Activated CD8-positive, alpha-beta memory T cell treated with anti-CD3 and anti-CD28 coated beads, Interleukin-2, amount 10 ng/mL, durations not matched to agents 7 days and 5 days (primary cell): ENCODE measurements at regions of chr11 and their contacts with region 1.

Region 1: DNA sequence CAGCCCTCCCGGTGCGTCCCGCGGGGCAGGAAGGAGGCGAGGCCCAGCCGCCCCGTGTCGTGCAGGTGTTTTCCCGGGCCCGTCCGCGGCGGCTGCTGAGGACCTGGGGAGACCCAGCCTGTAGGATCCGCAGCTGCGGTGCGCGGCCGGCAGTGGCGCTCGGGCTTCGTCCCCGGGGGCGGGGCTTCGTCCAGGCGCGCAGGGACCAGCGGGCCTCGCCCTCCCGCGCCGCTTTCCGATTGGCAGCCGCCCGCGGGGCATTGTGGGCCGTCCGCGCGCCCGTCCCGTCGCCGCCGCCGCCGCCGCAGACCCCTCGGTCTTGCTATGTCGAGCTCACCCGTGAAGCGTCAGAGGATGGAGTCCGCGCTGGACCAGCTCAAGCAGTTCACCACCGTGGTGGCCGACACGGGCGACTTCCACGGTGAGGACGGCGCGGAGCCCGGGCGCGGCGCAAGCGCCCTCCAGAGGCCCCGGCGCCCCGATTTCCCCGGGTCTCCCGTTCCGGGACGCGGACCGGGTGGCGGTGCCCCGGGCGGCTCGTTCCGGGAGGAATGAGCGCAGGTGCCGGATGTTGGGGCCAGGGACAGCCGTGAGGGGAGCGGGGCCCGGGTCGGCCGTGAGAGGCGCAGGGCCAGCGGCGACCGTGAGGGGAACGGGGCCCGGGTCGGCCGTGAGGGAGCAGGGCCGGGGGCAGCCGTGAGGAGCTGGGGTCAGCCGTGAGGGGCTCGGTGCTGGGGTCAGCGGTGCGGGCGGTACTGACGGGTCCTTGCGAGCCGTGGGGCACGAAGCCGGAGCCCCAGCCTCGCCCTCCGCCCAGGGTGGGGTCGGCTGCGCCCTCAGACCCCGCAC is at the start of gene TALDO1:
- DNase-seq: peak; percentile 89
- ATAC-seq: peak; percentile 92
- H3K4me3 Mint-ChIP-seq: peak within 1 kb of the TSS; percentile 84
- H3K27ac Mint-ChIP-seq: peak within 1 kb of the TSS; percentile 80
- H3K4me1 Mint-ChIP-seq: peaks cover 26% of the 10 kb centered on the region
- H3K27me3 Mint-ChIP-seq: no peaks in the 10 kb centered on the region
- total RNA-seq, gene TALDO1: 249 to 293 TPM

Region 2: DNA sequence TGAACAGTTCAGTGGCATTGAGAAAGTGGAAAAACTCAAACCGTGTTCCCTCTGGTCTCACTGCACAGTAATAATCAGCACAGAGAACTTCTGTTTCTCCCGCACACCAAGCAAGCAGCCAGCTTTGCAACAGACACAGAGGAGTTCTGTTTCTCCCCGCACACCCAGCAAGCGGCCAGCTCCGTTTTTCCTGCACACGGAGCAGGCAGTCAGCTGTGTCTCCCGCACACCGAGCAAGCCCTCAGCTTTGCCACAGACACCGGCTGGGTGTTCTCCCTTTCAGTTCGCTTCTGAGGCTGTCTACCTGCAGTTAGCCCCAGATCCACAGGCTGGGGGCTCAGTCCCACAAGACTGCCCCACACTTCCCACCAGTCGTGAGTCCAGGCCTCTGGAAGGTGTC is 10.0 kb before region 1 on chr11:
- CTCF ChIA-PET with region 1: interaction called, 12 read pairs
- DNase-seq: no peak
- ATAC-seq: peak; percentile 28
- H3K4me3 Mint-ChIP-seq: peak overlapping the region; percentile 10
- H3K27ac Mint-ChIP-seq: no peak overlapping the region
- H3K4me1 Mint-ChIP-seq: peaks cover 15% of the 10 kb centered on the region
- H3K27me3 Mint-ChIP-seq: peaks cover 22% of the 10 kb centered on the region

Region 3: DNA sequence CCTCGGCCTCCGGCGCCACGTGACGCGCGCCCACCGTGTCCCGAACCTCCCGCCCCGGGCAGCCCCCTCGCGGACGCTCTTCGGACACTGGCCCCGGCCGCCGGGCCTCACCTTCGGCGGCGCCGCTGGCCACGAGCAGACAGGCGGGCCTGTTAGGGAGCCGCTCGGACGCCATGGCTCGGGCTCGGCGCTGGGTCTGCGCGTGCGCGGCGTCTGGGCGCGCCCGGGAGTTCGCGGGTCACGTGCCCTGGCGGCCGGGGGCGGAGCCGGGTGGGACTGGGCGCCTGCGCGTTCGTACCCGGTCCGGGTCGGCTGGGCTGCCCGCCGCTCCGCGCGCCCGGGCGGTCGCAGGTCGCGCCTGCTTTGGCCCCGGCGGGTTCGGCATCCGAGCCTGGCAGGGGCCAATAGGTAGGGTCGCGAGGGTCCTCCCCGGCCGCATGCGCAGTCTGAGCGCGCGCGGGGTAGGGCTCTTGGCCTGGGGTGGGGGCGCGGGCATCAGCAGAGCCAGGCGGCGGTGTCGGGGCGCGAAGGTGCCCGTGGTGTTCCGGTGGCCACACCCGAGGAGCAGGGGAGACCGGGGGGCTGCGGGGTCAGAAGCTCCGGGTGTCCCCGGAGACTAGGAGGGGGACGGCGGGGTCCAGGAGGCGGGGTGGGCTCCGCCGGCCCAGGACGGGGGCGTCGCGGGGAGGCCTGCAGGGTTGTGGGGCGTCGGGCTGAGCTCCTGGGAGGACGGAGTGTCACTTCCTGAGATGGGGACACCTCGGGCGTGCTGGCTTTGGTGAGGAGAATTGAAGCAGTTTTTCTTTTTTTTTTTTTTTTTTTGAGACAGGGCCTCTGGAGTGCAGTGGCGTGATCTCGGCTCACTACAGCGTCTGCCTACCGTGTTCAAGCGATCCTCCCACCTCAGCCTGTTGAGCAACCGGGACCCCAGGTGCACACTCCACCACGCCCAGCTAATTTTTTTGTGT is 30.2 kb after region 1 on chr11 and contains the start of gene GATD1:
- CTCF ChIA-PET with region 1: interaction called, 10 read pairs
- DNase-seq: peak; percentile 95
- ATAC-seq: peak; percentile 91
- H3K4me3 Mint-ChIP-seq: peak within 1 kb of the TSS; percentile 81
- H3K27ac Mint-ChIP-seq: peak within 1 kb of the TSS; percentile 87
- H3K4me1 Mint-ChIP-seq: peaks cover 33% of the 10 kb centered on the region
- H3K27me3 Mint-ChIP-seq: no peaks in the 10 kb centered on the region
- total RNA-seq, gene GATD1: 62.4 to 79.4 TPM

Region 4: GRCh38 chr11:859509-860131 is 112.2 kb after region 1 on chr11:
- CTCF ChIA-PET with region 1: no interaction called
- DNase-seq: no peak
- ATAC-seq: no peak
- H3K4me3 Mint-ChIP-seq: no peak overlapping the region
- H3K27ac Mint-ChIP-seq: no peak overlapping the region
- H3K4me1 Mint-ChIP-seq: no peaks in the 10 kb centered on the region
- H3K27me3 Mint-ChIP-seq: no peaks in the 10 kb centered on the region

Region 5: GRCh38 chr11:1113405-1114201 is 366.2 kb after region 1 on chr11:
- CTCF ChIA-PET with region 1: no interaction called
- DNase-seq: no peak
- ATAC-seq: no peak
- H3K4me3 Mint-ChIP-seq: no peak overlapping the region
- H3K27ac Mint-ChIP-seq: no peak overlapping the region
- H3K4me1 Mint-ChIP-seq: no peaks in the 10 kb centered on the region
- H3K27me3 Mint-ChIP-seq: no peaks in the 10 kb centered on the region